H1 (cell line): ENCODE measurements at regions of chr11 and their contacts with region 1.

Region 1: GRCh38 chr11:71563401-71563800 is 2.0 kb upstream of the KRTAP5-10 start:
- DNase-seq: peak in 1 of 2 experiments; percentile 7
- H3K4me3 ChIP-seq: no peak overlapping the region
- H3K27ac ChIP-seq: no peak overlapping the region
- H3K4me1 ChIP-seq: peaks cover 0 to 4% (median 3%) of the 10 kb centered on the region in 4 experiments; a peak in 4 of 7 replicates
- H3K27me3 ChIP-seq: peaks cover 0 to 2% (median 0%) of the 10 kb centered on the region in 4 experiments; a peak in 2 of 7 replicates
- CTCF ChIP-seq: peak; percentile 66 to 81 (median 69)
- EP300 ChIP-seq: no peak
- POLR2A ChIP-seq: no peak
- RAD21 ChIP-seq: peak; percentile 74

Region 2: DNA sequence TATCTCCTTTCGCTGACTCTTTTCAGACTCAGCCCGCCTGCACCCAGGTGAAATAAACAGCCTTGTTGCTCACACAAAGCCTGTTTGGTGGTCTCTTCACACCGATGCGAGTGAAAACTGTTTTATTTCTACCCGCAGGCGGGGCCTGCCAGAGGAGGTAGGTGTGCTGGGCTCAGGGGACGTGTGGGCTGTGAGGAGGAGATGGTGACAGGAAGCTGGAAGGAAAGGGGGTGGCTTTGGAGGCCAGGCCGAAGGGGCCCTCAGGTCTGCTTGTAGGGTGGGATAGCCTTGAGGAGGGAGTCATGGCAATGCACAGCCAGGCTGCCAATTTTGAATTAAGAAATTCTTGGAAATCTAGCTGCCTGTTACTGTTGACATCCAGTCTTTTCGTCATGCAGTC is 57.6 kb before region 1 on chr11:
- CTCF ChIA-PET with region 1: interaction called, 11 read pairs
- POLR2A ChIA-PET with region 1: no interaction called
- DNase-seq: peak in 1 of 2 experiments; percentile 50
- H3K4me3 ChIP-seq: no peak overlapping the region
- H3K27ac ChIP-seq: no peak overlapping the region
- H3K4me1 ChIP-seq: peaks cover 0 to 8% (median 5%) of the 10 kb centered on the region in 4 experiments; a peak in 5 of 7 replicates
- H3K27me3 ChIP-seq: no peaks in the 10 kb centered on the region
- CTCF ChIP-seq: no peak
- EP300 ChIP-seq: no peak
- POLR2A ChIP-seq: no peak
- RAD21 ChIP-seq: no peak

Region 3: DNA sequence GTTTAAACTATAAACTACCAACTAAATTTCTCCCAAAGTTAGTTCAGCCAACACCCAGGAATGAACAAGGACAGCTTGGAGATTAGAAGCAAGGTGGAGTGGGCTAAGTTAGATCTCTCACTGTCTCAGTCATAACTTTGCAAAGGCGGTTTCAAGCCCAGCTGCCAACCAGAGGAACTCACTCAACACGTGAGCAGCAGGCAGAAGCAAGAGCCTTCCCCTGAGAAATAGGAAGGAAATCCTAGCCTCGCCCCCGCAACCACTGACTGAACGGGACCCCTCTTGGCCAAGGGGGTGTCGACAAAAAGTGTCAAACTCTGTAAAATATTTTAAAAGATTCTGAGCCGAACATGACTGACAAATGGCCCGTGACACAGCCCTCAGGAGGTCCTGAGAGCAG is 19.5 kb before region 1 on chr11:
- CTCF ChIA-PET with region 1: interaction called, 28 read pairs
- POLR2A ChIA-PET with region 1: interaction called, 4 read pairs
- DNase-seq: no peak
- H3K4me3 ChIP-seq: no peak overlapping the region
- H3K27ac ChIP-seq: no peak overlapping the region
- H3K4me1 ChIP-seq: no peaks in the 10 kb centered on the region; a peak in 1 of 7 replicates
- H3K27me3 ChIP-seq: no peaks in the 10 kb centered on the region
- CTCF ChIP-seq: no peak
- EP300 ChIP-seq: no peak
- POLR2A ChIP-seq: no peak
- RAD21 ChIP-seq: no peak

Region 4: GRCh38 chr11:71551711-71552110 is 11.7 kb before region 1 on chr11:
- CTCF ChIA-PET with region 1: interaction called, 28 read pairs
- POLR2A ChIA-PET with region 1: interaction called, 4 read pairs
- DNase-seq: no peak
- H3K4me3 ChIP-seq: no peak overlapping the region
- H3K27ac ChIP-seq: no peak overlapping the region
- H3K4me1 ChIP-seq: 0 out of 7 replicates have a peak, but pooled peaks cover 0 to 2% (median 0%) of the 10 kb centered on the region in 4 experiments
- H3K27me3 ChIP-seq: no peaks in the 10 kb centered on the region
- CTCF ChIP-seq: no peak
- EP300 ChIP-seq: no peak
- POLR2A ChIP-seq: no peak
- RAD21 ChIP-seq: no peak

Region 5: GRCh38 chr11:71574418-71574817 is 11.0 kb after region 1 on chr11:
- CTCF ChIA-PET with region 1: interaction called, 37 read pairs
- POLR2A ChIA-PET with region 1: no interaction called
- DNase-seq: no peak
- H3K4me3 ChIP-seq: no peak overlapping the region
- H3K27ac ChIP-seq: no peak overlapping the region
- H3K4me1 ChIP-seq: peaks cover 0 to 2% (median 0%) of the 10 kb centered on the region in 4 experiments; a peak in 2 of 7 replicates
- H3K27me3 ChIP-seq: no peaks in the 10 kb centered on the region; a peak in 1 of 7 replicates
- CTCF ChIP-seq: no peak
- EP300 ChIP-seq: no peak
- POLR2A ChIP-seq: no peak
- RAD21 ChIP-seq: no peak

Region 6: GRCh38 chr11:71580057-71581003 is 16.9 kb after region 1 on chr11:
- CTCF ChIA-PET with region 1: interaction called, 37 read pairs
- POLR2A ChIA-PET with region 1: no interaction called
- DNase-seq: peak in 1 of 2 experiments; percentile 31
- H3K4me3 ChIP-seq: no peak overlapping the region
- H3K27ac ChIP-seq: no peak overlapping the region
- H3K4me1 ChIP-seq: peaks cover 0 to 3% (median 3%) of the 10 kb centered on the region in 4 experiments; a peak in 4 of 7 replicates
- H3K27me3 ChIP-seq: peaks cover 0 to 5% (median 1%) of the 10 kb centered on the region in 4 experiments; a peak in 2 of 7 replicates
- CTCF ChIP-seq: peak; percentile 63 to 91 (median 65)
- EP300 ChIP-seq: no peak
- POLR2A ChIP-seq: no peak
- RAD21 ChIP-seq: peak; percentile 29 to 61; a peak in 2 of 4 replicates